ENCODE measurements at regions of chr7 and their contacts with region 1.

Region 1: GRCh38 chr7:43869006-43869866 is at the start of gene MRPS24:
- DNase-seq: peak; percentile 98
- H3K4me3 Mint-ChIP-seq: peak within 1 kb of the TSS; percentile 95
- H3K27ac Mint-ChIP-seq: peak within 1 kb of the TSS; percentile 84
- H3K4me1 Mint-ChIP-seq: peaks cover 18% of the 10 kb centered on the region
- H3K27me3 Mint-ChIP-seq: no peaks in the 10 kb centered on the region
- total RNA-seq, gene MRPS24: 119 and 123 TPM in 2 replicates

Region 2: DNA sequence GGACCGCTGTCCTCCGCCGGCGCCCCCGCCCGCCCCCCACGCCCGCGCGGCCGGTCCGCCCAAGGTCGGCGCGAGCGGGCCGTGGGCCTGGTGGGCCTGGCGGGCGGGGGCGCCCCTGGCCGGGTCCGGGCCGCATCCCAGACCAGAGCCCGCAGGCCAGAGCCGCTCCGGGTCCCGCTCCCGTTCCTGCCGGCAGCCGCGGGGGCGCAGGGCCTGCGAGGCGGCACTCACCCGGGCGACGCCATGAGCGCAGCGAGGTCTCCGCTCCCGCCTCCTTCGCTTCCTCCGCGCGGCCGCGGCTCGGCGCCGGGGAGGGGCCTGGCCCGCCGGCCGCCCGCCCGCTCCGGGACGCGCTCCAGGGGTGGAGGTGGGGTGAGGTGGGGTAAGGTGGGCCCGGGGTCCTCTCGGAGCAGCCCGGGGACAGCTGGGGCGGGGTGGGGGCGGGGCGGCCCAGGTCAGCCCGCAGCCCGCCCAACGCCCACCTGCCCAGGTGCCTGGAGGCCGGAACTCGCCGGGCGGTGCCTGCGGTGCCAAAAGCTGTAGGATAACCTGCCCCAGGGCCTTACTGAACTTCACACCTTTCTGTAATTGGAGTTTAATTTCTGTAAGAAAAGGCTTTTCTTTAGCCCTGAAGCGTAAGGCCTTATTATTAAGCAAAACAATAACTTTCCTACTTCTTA is 37.2 kb after region 1 on chr7 and contains the start of gene URGCP:
- intact Hi-C with region 1: loop called (anchors 2 kb)
- DNase-seq: peak; percentile 89
- H3K4me3 Mint-ChIP-seq: peak within 1 kb of the TSS; percentile 92
- H3K27ac Mint-ChIP-seq: peak within 1 kb of the TSS; percentile 94
- H3K4me1 Mint-ChIP-seq: peaks cover 29% of the 10 kb centered on the region
- H3K27me3 Mint-ChIP-seq: no peaks in the 10 kb centered on the region
- total RNA-seq, gene URGCP: 33.2 and 33.4 TPM in 2 replicates

Measured in activated CD4-positive, alpha-beta T cell treated with anti-CD3 and anti-CD28 coated beads, Interleukin-2, amount 10 ng/mL, durations not matched to agents 24 days and 14 days (primary cell).